ENCODE measurements at regions of chr20 and their contacts with region 1.

Region 1: DNA sequence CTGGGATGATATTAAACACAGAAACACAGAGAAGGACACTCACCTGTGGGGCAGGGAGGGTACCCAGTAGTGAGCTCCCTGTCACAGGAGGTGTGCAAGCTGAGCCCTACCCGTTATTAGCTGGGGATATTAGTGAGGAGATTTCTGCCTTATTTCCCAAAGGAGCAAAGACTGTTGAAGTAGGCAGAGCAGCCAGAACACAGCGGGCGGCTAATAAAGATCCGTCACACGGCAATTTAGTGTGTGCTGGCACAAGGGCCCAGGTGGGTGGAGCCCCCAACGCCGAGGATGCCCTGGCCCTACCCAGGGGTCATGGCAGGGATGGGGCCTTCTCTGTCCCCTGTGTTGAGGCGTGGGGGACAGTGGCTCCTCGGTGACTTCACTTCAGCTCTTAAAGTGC is 8.3 kb downstream of the VSTM2L start:
- DNase-seq: no peak
- ATAC-seq: no peak
- H3K4me3 ChIP-seq: no peak overlapping the region
- H3K4me3 Mint-ChIP-seq: no peak overlapping the region
- H3K27ac ChIP-seq: no peak overlapping the region
- H3K27ac Mint-ChIP-seq: no peak overlapping the region
- H3K4me1 ChIP-seq: peaks cover 0 to 11% of the 10 kb centered on the region in 2 experiments
- H3K4me1 Mint-ChIP-seq: peaks cover 13 to 28% (median 16%) of the 10 kb centered on the region in 3 donors
- H3K27me3 ChIP-seq: peaks cover 0 to 79% of the 10 kb centered on the region in 2 experiments
- H3K27me3 Mint-ChIP-seq: peaks cover 35 to 71% of the 10 kb centered on the region in 2 donors

Region 2: DNA sequence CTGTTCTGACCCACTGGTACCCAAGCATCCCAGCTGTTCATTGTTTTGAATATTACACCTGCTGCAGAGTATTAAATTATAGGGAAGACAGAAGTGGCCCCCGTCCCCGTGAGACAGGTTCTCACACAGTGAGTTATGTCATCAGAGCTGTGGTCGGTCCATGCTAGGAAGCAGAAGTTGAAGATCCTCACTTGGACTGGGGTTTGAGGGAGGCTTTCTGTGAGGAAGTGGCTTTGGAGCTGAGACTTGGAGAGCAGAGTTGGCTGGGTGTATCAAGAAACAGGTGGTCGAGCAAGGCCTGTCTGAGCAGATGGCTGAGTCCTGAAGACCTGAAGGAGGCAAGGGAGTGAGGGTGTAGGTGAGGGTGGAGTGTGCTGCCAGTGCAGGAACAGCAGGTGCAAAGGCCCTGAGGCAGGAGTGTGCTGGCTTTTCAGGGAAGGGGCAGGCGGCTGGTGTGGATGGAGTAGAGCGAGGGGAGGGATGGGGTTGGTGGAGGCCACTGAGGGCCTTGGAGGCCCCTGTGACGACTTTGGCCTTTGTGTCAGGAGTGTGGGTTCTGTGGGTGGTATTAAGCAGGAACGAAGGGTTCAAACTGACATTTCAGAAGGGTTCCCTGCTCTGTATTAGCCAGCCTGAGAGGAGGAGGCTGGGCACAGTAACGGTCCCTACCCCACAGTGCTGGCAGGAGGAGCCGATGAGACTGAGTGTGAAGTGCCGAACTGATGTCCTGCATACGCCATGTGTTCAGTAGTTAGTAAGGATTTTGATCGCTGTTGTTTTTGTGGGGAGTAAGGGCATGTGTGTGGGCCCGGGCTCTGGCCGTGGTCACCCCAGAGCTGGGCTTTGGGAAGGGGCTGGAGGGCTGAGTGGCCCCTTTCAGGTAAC is 553.5 kb before region 1 on chr20:
- CTCF ChIA-PET with region 1: interaction called in 1 of 2 experiments, 15 read pairs
- POLR2A ChIA-PET with region 1: no interaction called
- DNase-seq: peak in 2 of 35 experiments; percentile 24 to 26
- ATAC-seq: no peak
- H3K4me3 ChIP-seq: no peak overlapping the region
- H3K4me3 Mint-ChIP-seq: no peak overlapping the region
- H3K27ac ChIP-seq: no peak overlapping the region
- H3K27ac Mint-ChIP-seq: no peak overlapping the region
- H3K4me1 ChIP-seq: peaks cover 0 to 3% of the 10 kb centered on the region in 2 experiments
- H3K4me1 Mint-ChIP-seq: peaks cover 0 to 5% (median 0%) of the 10 kb centered on the region in 3 donors
- H3K27me3 ChIP-seq: no peaks in the 10 kb centered on the region
- H3K27me3 Mint-ChIP-seq: no peaks in the 10 kb centered on the region

Measured in T-cell (primary cell).